Posterior cingulate gyrus (tissue), 11 donors: ENCODE measurements at regions of chr12 and their contacts with region 1.

Region 1: GRCh38 chr12:19288603-19289244 is 150.6 kb upstream of the AEBP2 start:
- DNase-seq: no peak

Region 2: GRCh38 chr12:18967814-18968213 is 320.9 kb before region 1 on chr12:
- intact Hi-C with region 1: no loop called
- DNase-seq: no peak

Region 3: GRCh38 chr12:19181666-19182426 is 106.9 kb before region 1 on chr12:
- intact Hi-C with region 1: loop called (anchors 2 kb)
- DNase-seq: no peak